ENCODE measurements at regions of chr7 and their contacts with region 1.

Region 1: GRCh38 chr7:76302347-76303201 is at the start of gene HSPB1:
- DNase-seq: peak; percentile 95
- H3K4me3 ChIP-seq: peak within 1 kb of the TSS; percentile 65 to 91 (median 78)
- H3K27ac ChIP-seq: peak within 1 kb of the TSS; percentile 66
- H3K4me1 ChIP-seq: peaks cover 57% of the 10 kb centered on the region
- H3K27me3 ChIP-seq: no peaks in the 10 kb centered on the region
- CTCF ChIP-seq: no peak
- total RNA-seq, gene HSPB1: 523 to 862 TPM

Region 2: GRCh38 chr7:76244781-76245391 is 57.7 kb before region 1 on chr7:
- CTCF ChIA-PET with region 1: no interaction called
- dilution Hi-C with region 1: loop called (anchors 5 kb)
- in situ Hi-C with region 1: no loop called
- intact Hi-C with region 1: no loop called
- DNase-seq: no peak
- H3K4me3 ChIP-seq: no peak overlapping the region
- H3K27ac ChIP-seq: no peak overlapping the region
- H3K4me1 ChIP-seq: no peaks in the 10 kb centered on the region
- H3K27me3 ChIP-seq: no peaks in the 10 kb centered on the region
- CTCF ChIP-seq: no peak

Region 3: DNA sequence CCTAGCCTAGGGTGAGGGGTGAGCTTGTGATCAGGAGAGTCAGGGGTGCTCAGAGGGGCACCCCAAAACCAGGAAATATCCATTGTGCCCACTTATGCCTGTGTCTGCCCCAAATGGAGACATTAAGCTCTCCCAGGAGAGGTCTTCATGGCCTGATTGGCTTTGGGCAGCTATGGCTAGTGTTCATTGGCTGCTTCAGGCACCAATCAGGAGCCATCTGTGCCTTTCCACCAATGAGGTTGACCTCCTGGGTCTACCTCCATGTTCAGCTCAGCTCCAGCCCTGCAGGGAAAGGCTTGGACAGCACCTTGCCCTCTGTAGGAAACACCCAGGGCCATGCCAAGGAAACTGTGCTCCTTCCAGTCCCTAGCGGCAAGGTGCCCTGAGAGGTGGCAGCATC is 24.0 kb before region 1 on chr7:
- CTCF ChIA-PET with region 1: no interaction called
- dilution Hi-C with region 1: no loop called
- in situ Hi-C with region 1: no loop called
- intact Hi-C with region 1: no loop called
- DNase-seq: no peak
- H3K4me3 ChIP-seq: no peak overlapping the region
- H3K27ac ChIP-seq: no peak overlapping the region
- H3K4me1 ChIP-seq: no peaks in the 10 kb centered on the region
- H3K27me3 ChIP-seq: peaks cover 9% of the 10 kb centered on the region
- CTCF ChIP-seq: no peak

Region 4: DNA sequence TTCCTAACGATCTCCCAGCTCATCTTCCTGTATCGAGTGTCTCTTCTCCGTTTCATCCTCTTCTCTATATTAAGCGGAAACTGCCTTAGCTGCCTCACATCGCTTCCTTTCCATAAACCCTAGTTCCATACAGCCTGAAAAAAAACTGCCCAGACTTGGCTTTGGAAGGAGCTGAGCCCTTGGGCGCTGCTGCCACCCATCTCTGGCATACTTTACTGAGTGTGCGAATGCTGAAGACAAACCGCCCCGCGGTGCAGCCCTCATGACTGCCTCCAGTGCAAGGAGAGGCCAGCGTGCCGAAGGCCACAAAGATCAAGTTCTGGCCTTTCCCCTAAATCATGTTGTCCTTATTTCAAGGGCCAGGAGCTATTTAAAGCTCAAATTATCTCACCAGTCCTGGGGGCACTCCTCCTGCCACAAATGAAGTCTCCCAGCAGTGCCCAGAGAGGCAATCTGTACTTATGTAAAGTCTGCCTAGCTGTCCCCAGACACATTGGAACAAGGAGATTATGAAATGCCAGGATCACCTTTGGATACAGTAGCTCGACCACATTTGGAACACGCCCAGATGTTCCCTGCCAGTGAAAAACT is 31.0 kb after region 1 on chr7:
- CTCF ChIA-PET with region 1: no interaction called
- dilution Hi-C with region 1: no loop called
- in situ Hi-C with region 1: no loop called
- intact Hi-C with region 1: no loop called
- DNase-seq: no peak
- H3K4me3 ChIP-seq: no peak overlapping the region
- H3K27ac ChIP-seq: no peak overlapping the region
- H3K4me1 ChIP-seq: peaks cover 10% of the 10 kb centered on the region
- H3K27me3 ChIP-seq: no peaks in the 10 kb centered on the region
- CTCF ChIP-seq: no peak

Region 5: DNA sequence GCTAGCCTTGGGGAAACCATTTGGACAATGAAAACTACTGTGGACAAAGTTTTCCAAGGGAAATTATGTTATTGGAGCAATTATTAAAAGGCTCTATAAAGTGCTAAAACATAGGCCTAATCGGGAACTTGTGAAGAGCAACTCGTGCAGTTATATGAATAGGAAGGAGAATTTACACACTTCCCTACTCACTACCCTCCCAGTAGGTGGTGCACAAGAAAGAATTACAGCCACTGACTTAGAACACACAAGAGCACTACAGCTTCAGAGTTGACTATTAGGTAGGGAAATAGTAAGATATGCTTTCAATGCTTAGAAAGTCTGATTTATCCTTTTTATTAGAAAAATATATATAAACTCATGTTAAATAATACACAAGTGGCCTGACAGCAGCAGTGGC is 1066.4 kb after region 1 on chr7:
- CTCF ChIA-PET with region 1: no interaction called
- dilution Hi-C with region 1: no loop called
- in situ Hi-C with region 1: no loop called
- intact Hi-C with region 1: no loop called
- DNase-seq: no peak
- H3K4me3 ChIP-seq: no peak overlapping the region
- H3K27ac ChIP-seq: no peak overlapping the region
- H3K4me1 ChIP-seq: no peaks in the 10 kb centered on the region
- H3K27me3 ChIP-seq: no peaks in the 10 kb centered on the region
- CTCF ChIP-seq: peak in 1 of 2 donors; percentile 42

Measured in mammary epithelial cell (primary cell).